ENCODE measurements at regions of chr4 and their contacts with region 1.

Region 1: DNA sequence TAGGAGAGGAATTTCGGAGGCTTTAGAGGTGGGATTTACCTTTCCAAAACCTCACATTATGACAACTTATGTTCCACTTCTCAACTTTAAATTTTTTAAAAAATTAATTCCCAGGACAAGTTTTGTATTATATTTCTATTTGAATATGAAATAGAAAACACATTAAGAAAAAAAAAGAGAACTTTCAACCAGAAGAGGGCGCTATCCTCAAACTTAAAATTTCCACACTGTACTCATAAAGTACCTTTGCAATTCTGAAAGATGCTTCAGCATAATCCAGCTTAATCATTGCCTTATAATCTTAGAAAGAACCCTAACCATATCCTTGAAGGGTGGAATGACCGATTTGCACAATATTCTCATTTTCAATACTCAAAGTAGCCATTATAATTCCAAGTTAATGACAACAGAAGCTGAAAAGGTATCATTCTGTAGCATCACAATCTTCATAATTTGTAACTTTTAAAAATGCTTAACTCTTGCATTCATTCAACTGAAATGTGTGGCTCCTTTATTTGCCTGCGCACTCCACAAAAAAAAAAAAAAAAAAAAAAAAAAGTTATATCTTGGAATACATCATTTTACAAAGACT is 158.0 kb downstream of the KCNIP4 start:
- DNase-seq: no peak
- ATAC-seq: no peak
- H3K4me3 ChIP-seq: no peak overlapping the region
- H3K27ac ChIP-seq: no peak overlapping the region
- H3K4me1 ChIP-seq: no peaks in the 10 kb centered on the region
- H3K27me3 ChIP-seq: no peaks in the 10 kb centered on the region

Region 2: GRCh38 chr4:21830272-21830671 is 39.7 kb after region 1 on chr4:
- intact Hi-C with region 1: no loop called
- DNase-seq: no peak
- ATAC-seq: no peak
- H3K4me3 ChIP-seq: no peak overlapping the region
- H3K27ac ChIP-seq: no peak overlapping the region
- H3K4me1 ChIP-seq: no peaks in the 10 kb centered on the region
- H3K27me3 ChIP-seq: no peaks in the 10 kb centered on the region

Region 3: DNA sequence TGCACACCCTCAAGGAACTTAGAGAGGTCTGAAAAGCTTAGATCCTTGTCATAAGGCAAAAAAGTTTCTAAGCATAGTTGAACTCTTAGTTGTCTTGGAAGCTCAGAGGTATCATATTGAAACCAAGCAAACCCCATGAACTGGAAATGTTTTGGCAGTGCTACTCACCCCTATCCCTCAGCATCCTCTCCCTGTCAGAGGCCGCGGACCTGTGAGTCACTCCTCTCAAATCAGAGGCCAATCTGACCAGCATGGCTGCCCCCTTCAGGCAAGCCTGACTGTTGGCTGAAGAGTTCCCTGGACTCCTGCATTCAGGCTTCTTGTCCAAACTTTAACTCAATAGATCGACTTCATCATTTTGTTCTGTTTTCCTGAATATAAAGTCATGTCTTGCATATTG is 88.7 kb after region 1 on chr4:
- intact Hi-C with region 1: no loop called
- DNase-seq: no peak
- ATAC-seq: no peak
- H3K4me3 ChIP-seq: no peak overlapping the region
- H3K27ac ChIP-seq: no peak overlapping the region
- H3K4me1 ChIP-seq: no peaks in the 10 kb centered on the region
- H3K27me3 ChIP-seq: no peaks in the 10 kb centered on the region

Region 4: GRCh38 chr4:22389240-22389870 is 598.8 kb after region 1 on chr4:
- intact Hi-C with region 1: loop called (anchors 2 kb)
- DNase-seq: peak in 1 of 2 donors; percentile 46
- ATAC-seq: peak; percentile 68
- H3K4me3 ChIP-seq: no peak overlapping the region
- H3K27ac ChIP-seq: no peak overlapping the region
- H3K4me1 ChIP-seq: no peaks in the 10 kb centered on the region
- H3K27me3 ChIP-seq: no peaks in the 10 kb centered on the region

Region 5: GRCh38 chr4:22688236-22688635 is 897.7 kb after region 1 on chr4:
- intact Hi-C with region 1: loop called in 1 of 2 experiments (anchors 10 kb)
- DNase-seq: no peak
- ATAC-seq: no peak
- H3K4me3 ChIP-seq: no peak overlapping the region
- H3K27ac ChIP-seq: no peak overlapping the region
- H3K4me1 ChIP-seq: peaks cover 0 to 2% of the 10 kb centered on the region in 2 donors
- H3K27me3 ChIP-seq: no peaks in the 10 kb centered on the region

Measured in aorta (tissue), 5 donors.